ENCODE measurements at regions of chr5 and their contacts with region 1.

Region 1: GRCh38 chr5:127428748-127429147 is 88.7 kb upstream of the PRRC1 start:
- DNase-seq: no peak
- H3K4me3 ChIP-seq: no peak overlapping the region
- H3K27ac ChIP-seq: no peak overlapping the region
- H3K4me1 ChIP-seq: no peaks in the 10 kb centered on the region
- H3K27me3 ChIP-seq: no peaks in the 10 kb centered on the region
- CTCF ChIP-seq: no peak
- POLR2A ChIP-seq: no peak

Region 2: GRCh38 chr5:127440831-127441230 is 12.1 kb after region 1 on chr5:
- intact Hi-C with region 1: loop called (anchors 1 kb)
- DNase-seq: no peak
- H3K4me3 ChIP-seq: no peak overlapping the region
- H3K27ac ChIP-seq: no peak overlapping the region
- H3K4me1 ChIP-seq: no peaks in the 10 kb centered on the region
- H3K27me3 ChIP-seq: no peaks in the 10 kb centered on the region
- CTCF ChIP-seq: no peak
- POLR2A ChIP-seq: no peak

Measured in breast epithelium (tissue), 4 donors.